ENCODE measurements at regions of chr13 and their contacts with region 1.

Region 1: DNA sequence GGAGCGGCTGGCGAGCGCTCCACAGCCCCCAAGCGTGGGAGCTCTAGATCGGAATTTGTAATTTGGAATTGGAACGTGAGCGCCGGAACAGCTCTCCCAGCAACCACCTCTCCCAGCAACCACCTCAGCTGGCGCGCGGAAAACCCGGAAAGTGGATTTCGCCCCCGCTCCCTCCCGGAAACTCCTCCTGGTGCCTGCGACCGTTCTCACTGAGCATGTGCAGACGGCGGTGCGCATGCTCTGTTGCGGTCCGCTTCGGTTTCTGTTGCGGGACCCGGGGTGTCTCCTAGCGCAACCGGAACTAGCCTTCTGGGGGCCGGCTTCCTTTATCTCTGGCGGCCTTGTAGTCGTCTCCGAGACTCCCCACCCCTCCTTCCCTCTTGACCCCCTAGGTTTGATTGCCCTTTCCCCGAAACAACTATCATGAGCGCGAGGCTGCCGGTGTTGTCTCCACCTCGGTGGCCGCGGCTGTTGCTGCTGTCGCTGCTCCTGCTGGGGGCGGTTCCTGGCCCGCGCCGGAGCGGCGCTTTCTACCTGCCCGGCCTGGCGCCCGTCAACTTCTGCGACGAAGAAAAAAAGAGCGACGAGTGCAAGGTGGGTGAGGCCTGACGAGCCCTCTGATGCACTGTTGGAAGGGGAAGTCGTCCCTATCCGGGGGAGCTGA is at the start of gene TM9SF2:
- DNase-seq: peak; percentile 92 to 99 (median 97)
- ATAC-seq: peak; percentile 59
- H3K4me3 ChIP-seq: peak within 1 kb of the TSS; percentile 83 to 91
- H3K4me3 Mint-ChIP-seq: peak within 1 kb of the TSS; percentile 99
- H3K27ac ChIP-seq: peak within 1 kb of the TSS; percentile 86 to 88
- H3K27ac Mint-ChIP-seq: peak within 1 kb of the TSS; percentile 98
- H3K4me1 ChIP-seq: peaks cover 66% of the 10 kb centered on the region
- H3K4me1 Mint-ChIP-seq: peaks cover 81% of the 10 kb centered on the region
- H3K27me3 ChIP-seq: no peaks in the 10 kb centered on the region
- H3K27me3 Mint-ChIP-seq: no peaks in the 10 kb centered on the region
- CTCF ChIP-seq: no peak
- total RNA-seq, gene TM9SF2: 42.7 to 47.5 TPM

Region 2: DNA sequence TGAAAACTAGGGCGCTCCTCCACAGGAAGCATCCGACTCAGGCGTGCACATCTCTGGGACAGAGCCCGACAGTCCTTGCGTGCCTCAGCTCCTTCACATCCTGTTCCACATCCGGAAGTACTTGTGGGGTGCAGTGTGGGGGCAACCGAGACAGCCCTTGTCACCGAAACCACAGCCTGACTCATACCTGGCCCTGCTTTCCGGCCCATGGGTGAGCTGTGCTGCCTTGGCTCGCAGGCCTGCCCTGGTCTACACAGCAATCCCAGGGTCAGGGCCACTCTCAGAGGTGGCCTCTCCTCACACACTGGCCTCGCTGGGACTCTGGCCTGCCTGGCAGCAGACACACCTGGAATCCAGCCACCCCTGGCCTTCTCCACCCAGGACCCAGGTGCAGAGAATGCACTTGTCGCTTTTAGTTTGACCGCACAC is 1024.8 kb before region 1 on chr13:
- CTCF ChIA-PET with region 1: no interaction called
- POLR2A ChIA-PET with region 1: no interaction called
- intact Hi-C with region 1: loop called in 1 of 2 experiments (anchors 5 kb)
- DNase-seq: peak; percentile 57 to 95 (median 87)
- ATAC-seq: peak; percentile 90
- H3K4me3 ChIP-seq: peak overlapping the region in 1 of 2 experiments; percentile 20
- H3K4me3 Mint-ChIP-seq: peak overlapping the region; percentile 67
- H3K27ac ChIP-seq: peak overlapping the region; percentile 44 to 58
- H3K27ac Mint-ChIP-seq: peak overlapping the region; percentile 94
- H3K4me1 ChIP-seq: peaks cover 44% of the 10 kb centered on the region
- H3K4me1 Mint-ChIP-seq: peaks cover 66% of the 10 kb centered on the region
- H3K27me3 ChIP-seq: no peaks in the 10 kb centered on the region
- H3K27me3 Mint-ChIP-seq: no peaks in the 10 kb centered on the region
- CTCF ChIP-seq: no peak

Region 3: GRCh38 chr13:98598043-98598442 is 903.3 kb before region 1 on chr13:
- CTCF ChIA-PET with region 1: no interaction called
- POLR2A ChIA-PET with region 1: no interaction called
- intact Hi-C with region 1: no loop called
- DNase-seq: no peak
- ATAC-seq: no peak
- H3K4me3 ChIP-seq: no peak overlapping the region
- H3K4me3 Mint-ChIP-seq: no peak overlapping the region
- H3K27ac ChIP-seq: no peak overlapping the region
- H3K27ac Mint-ChIP-seq: no peak overlapping the region
- H3K4me1 ChIP-seq: no peaks in the 10 kb centered on the region
- H3K4me1 Mint-ChIP-seq: no peaks in the 10 kb centered on the region
- H3K27me3 ChIP-seq: no peaks in the 10 kb centered on the region
- H3K27me3 Mint-ChIP-seq: peaks cover 2% of the 10 kb centered on the region
- CTCF ChIP-seq: no peak

Region 4: DNA sequence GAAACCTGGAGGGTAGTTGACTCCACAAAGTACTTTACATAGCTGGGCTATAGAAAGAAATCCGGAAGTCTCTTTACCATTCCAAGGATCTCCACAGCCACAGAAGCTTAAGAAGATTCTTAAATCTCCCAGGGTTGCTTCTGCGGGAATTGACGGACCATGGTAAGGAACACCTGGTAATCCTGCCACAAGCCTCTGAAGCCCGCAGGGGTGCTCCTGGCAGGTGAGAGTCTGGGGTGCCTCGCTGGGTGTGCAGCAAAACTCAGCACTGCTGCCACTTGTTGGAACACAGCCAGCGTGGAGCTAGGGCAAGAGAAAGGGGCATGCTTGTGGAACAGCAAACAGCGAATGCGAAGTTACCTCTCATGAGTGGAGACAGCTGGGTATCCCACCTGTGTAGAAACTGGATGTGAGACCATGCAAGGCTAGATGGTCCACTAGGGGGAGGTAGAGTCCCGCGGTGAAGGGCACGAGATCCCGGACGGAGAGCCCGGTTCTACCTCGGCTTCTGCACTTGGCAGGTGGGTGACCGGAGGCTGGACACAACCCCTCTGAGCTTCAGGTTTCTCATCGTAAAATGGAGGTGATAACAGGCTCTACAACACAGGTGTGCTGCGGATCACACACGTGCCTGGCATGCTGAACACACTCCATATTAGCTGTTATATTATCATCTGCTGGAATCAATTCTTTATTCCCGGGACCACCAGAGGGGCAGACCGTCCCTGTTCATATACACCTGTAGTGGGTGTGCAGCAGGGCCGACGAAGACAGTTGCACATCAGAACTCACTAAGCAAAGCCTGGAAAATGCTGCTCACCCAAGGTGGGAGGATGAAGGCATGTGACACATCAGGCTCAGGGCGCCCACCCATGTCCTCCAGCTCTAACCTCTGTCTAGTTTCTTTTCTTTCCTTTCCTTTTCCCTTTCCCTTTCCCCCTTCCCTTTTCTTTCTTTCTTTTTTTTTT is 324.7 kb before region 1 on chr13:
- CTCF ChIA-PET with region 1: interaction called, 3 read pairs
- POLR2A ChIA-PET with region 1: no interaction called
- intact Hi-C with region 1: loop called in 1 of 2 experiments (anchors 5 kb)
- DNase-seq: peak; percentile 58 to 87 (median 82)
- ATAC-seq: peak; percentile 93
- H3K4me3 ChIP-seq: peak overlapping the region in 1 of 2 experiments; percentile 25
- H3K4me3 Mint-ChIP-seq: peak overlapping the region; percentile 72
- H3K27ac ChIP-seq: no peak overlapping the region
- H3K27ac Mint-ChIP-seq: peak overlapping the region; percentile 64
- H3K4me1 ChIP-seq: peaks cover 43% of the 10 kb centered on the region
- H3K4me1 Mint-ChIP-seq: peaks cover 45% of the 10 kb centered on the region
- H3K27me3 ChIP-seq: no peaks in the 10 kb centered on the region
- H3K27me3 Mint-ChIP-seq: no peaks in the 10 kb centered on the region
- CTCF ChIP-seq: peak; percentile 80

Region 5: GRCh38 chr13:99214232-99214631 is 287.1 kb before region 1 on chr13:
- CTCF ChIA-PET with region 1: no interaction called
- POLR2A ChIA-PET with region 1: no interaction called
- intact Hi-C with region 1: loop called in 1 of 2 experiments (anchors 5 kb)
- DNase-seq: peak in 5 of 9 experiments; percentile 33 to 72 (median 60)
- ATAC-seq: peak; percentile 37
- H3K4me3 ChIP-seq: peak overlapping the region; percentile 9 to 65
- H3K4me3 Mint-ChIP-seq: peak overlapping the region; percentile 88
- H3K27ac ChIP-seq: peak overlapping the region; percentile 3 to 78
- H3K27ac Mint-ChIP-seq: peak overlapping the region; percentile 99
- H3K4me1 ChIP-seq: peaks cover 76% of the 10 kb centered on the region
- H3K4me1 Mint-ChIP-seq: peaks cover 81% of the 10 kb centered on the region
- H3K27me3 ChIP-seq: no peaks in the 10 kb centered on the region
- H3K27me3 Mint-ChIP-seq: no peaks in the 10 kb centered on the region
- CTCF ChIP-seq: no peak

Region 6: GRCh38 chr13:99442273-99442895 is 58.9 kb before region 1 on chr13:
- CTCF ChIA-PET with region 1: interaction called, 69 read pairs
- POLR2A ChIA-PET with region 1: no interaction called
- intact Hi-C with region 1: loop called (anchors 1 kb)
- DNase-seq: peak in 7 of 9 experiments; percentile 40 to 78 (median 59)
- ATAC-seq: peak; percentile 92
- H3K4me3 ChIP-seq: no peak overlapping the region
- H3K4me3 Mint-ChIP-seq: no peak overlapping the region
- H3K27ac ChIP-seq: no peak overlapping the region
- H3K27ac Mint-ChIP-seq: no peak overlapping the region
- H3K4me1 ChIP-seq: peaks cover 4% of the 10 kb centered on the region
- H3K4me1 Mint-ChIP-seq: peaks cover 5% of the 10 kb centered on the region
- H3K27me3 ChIP-seq: no peaks in the 10 kb centered on the region
- H3K27me3 Mint-ChIP-seq: no peaks in the 10 kb centered on the region
- CTCF ChIP-seq: peak; percentile 99

Region 7: DNA sequence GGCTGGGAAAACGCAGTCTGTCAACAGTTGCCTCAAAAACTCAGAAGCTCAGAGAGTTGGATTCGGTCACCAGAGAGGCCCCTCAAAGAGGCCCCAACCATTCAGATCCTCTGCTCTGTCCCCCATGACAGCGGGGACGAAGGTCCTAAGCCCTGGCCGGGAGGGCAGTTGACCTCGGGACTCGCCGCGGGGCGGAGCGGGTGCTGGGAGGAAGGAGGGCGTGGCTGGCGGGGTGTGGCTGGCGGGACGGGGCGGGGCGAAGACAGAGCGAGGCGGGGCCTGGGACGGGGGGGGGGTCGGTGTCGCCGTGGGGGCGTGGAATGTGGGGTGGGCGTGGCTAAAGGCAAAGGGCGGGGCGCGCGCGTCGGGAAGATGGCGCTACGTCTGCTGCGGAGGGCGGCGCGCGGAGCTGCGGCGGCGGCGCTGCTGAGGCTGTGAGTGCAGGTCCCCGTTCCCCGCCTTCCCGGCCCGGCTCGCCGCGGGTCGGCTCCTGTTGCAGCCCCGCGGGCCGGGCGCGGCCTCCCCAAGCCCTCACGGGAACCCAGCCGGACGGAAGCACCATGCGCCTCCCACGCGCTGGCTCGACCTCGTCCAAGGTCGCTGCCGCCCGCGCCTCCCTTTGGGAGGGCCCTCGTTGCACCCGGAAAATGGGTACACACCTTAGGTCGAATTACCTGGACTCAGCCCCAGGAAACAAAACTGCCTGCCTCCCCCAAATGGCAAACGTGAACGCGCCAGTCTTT is 105.2 kb after region 1 on chr13:
- CTCF ChIA-PET with region 1: no interaction called
- POLR2A ChIA-PET with region 1: no interaction called
- intact Hi-C with region 1: loop called (anchors 1 kb)
- DNase-seq: peak; percentile 82 to 95 (median 91)
- ATAC-seq: peak; percentile 93
- H3K4me3 ChIP-seq: peak within 1 kb of the TSS; percentile 89 to 93
- H3K4me3 Mint-ChIP-seq: peak within 1 kb of the TSS; percentile 92
- H3K27ac ChIP-seq: peak within 1 kb of the TSS; percentile 72 to 81
- H3K27ac Mint-ChIP-seq: peak within 1 kb of the TSS; percentile 92
- H3K4me1 ChIP-seq: peaks cover 23% of the 10 kb centered on the region
- H3K4me1 Mint-ChIP-seq: peaks cover 45% of the 10 kb centered on the region
- H3K27me3 ChIP-seq: no peaks in the 10 kb centered on the region
- H3K27me3 Mint-ChIP-seq: no peaks in the 10 kb centered on the region
- CTCF ChIP-seq: no peak

Region 8: DNA sequence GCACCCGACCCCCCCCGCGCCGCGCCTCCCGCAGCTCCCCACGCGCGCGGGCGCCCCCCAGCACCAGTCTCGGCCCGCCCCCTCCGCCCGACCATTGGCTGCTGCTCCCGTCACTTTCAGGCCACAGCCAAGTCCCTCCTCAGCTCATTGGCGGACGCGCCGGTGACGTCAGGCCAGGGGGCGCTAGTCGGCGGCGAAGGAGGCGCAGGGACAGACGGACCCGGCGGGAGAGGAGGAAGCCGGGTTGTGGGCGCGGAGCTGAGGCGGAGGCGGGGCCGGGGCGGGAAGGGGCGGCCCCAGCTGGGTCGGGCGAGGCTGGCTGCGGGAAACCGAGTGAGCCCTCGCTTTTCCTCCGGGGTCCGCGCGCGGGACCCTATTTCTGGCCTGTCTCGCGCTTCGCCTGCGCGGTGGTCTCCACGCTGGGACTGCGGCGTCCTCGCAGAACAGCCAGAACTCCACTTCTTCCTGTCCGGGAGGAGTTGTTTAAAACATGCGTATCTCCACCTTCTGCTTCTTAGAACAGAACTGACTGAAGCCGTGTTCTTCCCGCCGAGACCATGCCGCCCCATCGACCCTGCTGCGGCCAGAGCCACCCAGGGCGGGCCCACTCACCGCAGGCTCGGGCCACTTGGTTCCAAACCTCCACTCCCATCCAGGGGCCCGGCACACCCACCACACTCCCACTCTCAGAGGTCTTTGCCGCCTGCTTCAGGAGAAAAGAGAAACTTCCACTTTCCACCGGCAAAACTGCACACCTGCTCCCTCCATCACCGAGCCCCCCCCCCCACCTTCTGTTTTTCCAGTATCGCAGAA is 1173.7 kb after region 1 on chr13:
- CTCF ChIA-PET with region 1: no interaction called
- POLR2A ChIA-PET with region 1: no interaction called
- intact Hi-C with region 1: loop called (anchors 2 to 5 kb)
- DNase-seq: peak; percentile 99 to 100 (median 100)
- ATAC-seq: peak; percentile 92
- H3K4me3 ChIP-seq: peak overlapping the region; percentile 88 to 98
- H3K4me3 Mint-ChIP-seq: peak overlapping the region; percentile 95
- H3K27ac ChIP-seq: peak overlapping the region; percentile 55 to 78
- H3K27ac Mint-ChIP-seq: peak overlapping the region; percentile 89
- H3K4me1 ChIP-seq: peaks cover 14% of the 10 kb centered on the region
- H3K4me1 Mint-ChIP-seq: peaks cover 29% of the 10 kb centered on the region
- H3K27me3 ChIP-seq: no peaks in the 10 kb centered on the region
- H3K27me3 Mint-ChIP-seq: no peaks in the 10 kb centered on the region
- CTCF ChIP-seq: no peak

Measured in CD8-positive, alpha-beta T cell (primary cell).